Esophagus muscularis mucosa (tissue), 4 donors: ENCODE measurements at regions of chr16 and their contacts with region 1.

Region 1: DNA sequence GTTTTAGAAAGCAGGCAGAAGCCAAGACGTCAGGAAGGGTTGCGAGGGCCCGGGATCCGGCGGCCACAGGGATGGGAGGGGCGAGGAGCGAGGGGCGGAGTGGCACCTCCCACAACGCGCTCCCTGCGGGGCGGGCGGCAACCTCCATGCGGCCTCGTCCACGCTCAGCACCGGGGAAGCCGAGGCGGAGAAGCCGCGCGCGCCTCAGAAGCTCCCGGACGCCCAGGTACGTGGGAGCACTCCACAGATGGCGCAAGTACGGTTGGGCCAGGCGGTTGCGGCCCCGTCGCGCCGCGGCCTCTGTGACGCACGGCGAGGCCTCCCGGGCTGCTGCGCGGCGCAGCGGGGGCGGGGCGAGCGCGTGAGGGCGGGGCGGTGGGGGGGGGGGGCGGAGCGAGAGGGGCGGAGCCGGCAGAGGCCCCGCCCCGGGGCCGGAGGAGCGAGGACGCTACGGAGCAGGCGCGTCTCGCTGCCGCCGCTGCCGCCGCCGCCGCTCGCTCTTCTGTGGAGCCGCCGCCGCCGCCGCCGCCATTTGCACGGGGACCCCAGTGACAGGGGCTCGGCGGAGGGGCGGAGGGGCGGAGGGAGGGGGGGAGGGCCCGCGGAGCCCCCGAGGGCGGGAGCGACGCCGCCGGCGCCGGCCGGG is at the start of gene TENT4B:
- DNase-seq: peak; percentile 95
- H3K4me3 ChIP-seq: peak within 1 kb of the TSS; percentile 65 to 88 (median 72)
- H3K27ac ChIP-seq: peak within 1 kb of the TSS; percentile 90 to 96 (median 92)
- H3K4me1 ChIP-seq: peaks cover 37 to 45% (median 41%) of the 10 kb centered on the region in 4 donors
- H3K27me3 ChIP-seq: no peaks in the 10 kb centered on the region
- CTCF ChIP-seq: no peak
- EP300 ChIP-seq: no peak
- POLR2A ChIP-seq: peak; percentile 15
- total RNA-seq, gene TENT4B: 9.9 to 18.3 (median 16.7) TPM

Region 2: GRCh38 chr16:50065624-50066481 is 87.1 kb before region 1 on chr16 and contains the start of gene HEATR3:
- intact Hi-C with region 1: loop called (anchors 5 kb)
- DNase-seq: peak; percentile 96
- H3K4me3 ChIP-seq: peak within 1 kb of the TSS; percentile 87 to 99 (median 96)
- H3K27ac ChIP-seq: peak within 1 kb of the TSS; percentile 95 to 99 (median 98)
- H3K4me1 ChIP-seq: peaks cover 20 to 39% (median 29%) of the 10 kb centered on the region in 4 donors
- H3K27me3 ChIP-seq: no peaks in the 10 kb centered on the region
- CTCF ChIP-seq: no peak
- EP300 ChIP-seq: no peak
- POLR2A ChIP-seq: no peak
- total RNA-seq, gene HEATR3: 10.0 to 25.7 (median 12.4) TPM

Region 3: GRCh38 chr16:50335196-50335958 is 182.4 kb after region 1 on chr16:
- intact Hi-C with region 1: loop called (anchors 10 kb)
- DNase-seq: no peak
- H3K4me3 ChIP-seq: no peak overlapping the region
- H3K27ac ChIP-seq: peak overlapping the region; percentile 73 to 78 (median 74)
- H3K4me1 ChIP-seq: peaks cover 0 to 75% (median 48%) of the 10 kb centered on the region in 4 donors
- H3K27me3 ChIP-seq: no peaks in the 10 kb centered on the region
- CTCF ChIP-seq: no peak
- EP300 ChIP-seq: no peak
- POLR2A ChIP-seq: no peak